ENCODE measurements at regions of chr1 and their contacts with region 1.

Region 1: DNA sequence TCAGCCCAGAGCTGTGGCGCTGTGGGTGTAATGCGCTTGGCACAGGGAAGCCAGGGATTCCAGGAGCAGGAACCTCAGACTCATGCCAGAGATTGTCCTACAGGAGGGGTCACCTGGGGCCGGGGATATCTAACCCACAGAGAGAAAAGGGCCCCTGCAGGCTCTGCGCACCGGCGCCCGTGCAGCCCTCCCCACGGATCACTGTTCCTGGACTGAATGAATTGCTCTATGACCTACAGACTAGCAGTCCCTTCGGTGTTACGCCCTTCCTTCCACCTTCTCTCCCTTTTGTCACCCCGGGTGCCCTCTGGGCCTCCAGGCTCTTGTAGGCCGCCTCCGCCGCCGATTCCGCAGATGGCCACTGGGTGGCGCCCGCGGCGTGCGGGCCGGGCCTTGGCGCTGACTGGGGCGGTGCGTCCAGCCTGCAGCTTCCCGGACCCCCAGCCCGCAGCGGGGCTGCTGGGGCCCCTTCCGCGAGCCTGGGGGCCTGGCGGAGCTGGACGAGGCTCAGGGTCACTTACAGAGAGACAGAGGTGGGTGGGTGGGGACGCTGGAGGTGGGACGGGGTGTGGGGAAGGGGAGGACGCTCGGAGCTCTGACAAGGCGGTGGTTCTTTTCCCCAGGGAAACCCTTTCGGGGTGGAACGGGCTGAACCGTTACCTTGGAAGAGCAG is 101.3 kb downstream of the IER5 start:
- DNase-seq: peak; percentile 19
- ATAC-seq: peak; percentile 98
- H3K4me3 ChIP-seq: peak overlapping the region in 1 of 2 experiments; percentile 25; a peak in 3 of 4 replicates
- H3K27ac ChIP-seq: no peak overlapping the region
- H3K4me1 ChIP-seq: peaks cover 0 to 5% of the 10 kb centered on the region in 2 experiments; a peak in 1 of 4 replicates
- H3K27me3 ChIP-seq: 0 out of 2 replicates have a peak, but pooled peaks cover 9% of the 10 kb centered on the region
- CTCF ChIP-seq: peak; percentile 97 to 99 (median 98)
- POLR2A ChIP-seq: no peak
- RAD21 ChIP-seq: peak; percentile 97

Region 2: GRCh38 chr1:181504399-181504842 is 314.6 kb after region 1 on chr1:
- CTCF ChIA-PET with region 1: interaction called, 3 read pairs
- POLR2A ChIA-PET with region 1: no interaction called
- RAD21 ChIA-PET with region 1: no interaction called
- intact Hi-C with region 1: loop called (anchors 10 kb)
- DNase-seq: peak; percentile 62
- ATAC-seq: peak; percentile 98
- H3K4me3 ChIP-seq: no peak overlapping the region
- H3K27ac ChIP-seq: no peak overlapping the region
- H3K4me1 ChIP-seq: no peaks in the 10 kb centered on the region
- H3K27me3 ChIP-seq: peaks cover 10% of the 10 kb centered on the region
- CTCF ChIP-seq: peak in 2 of 3 experiments; percentile 64 to 66; a peak in 4 of 6 replicates
- POLR2A ChIP-seq: no peak
- RAD21 ChIP-seq: no peak; the same call in 1 of the 2 replicates

Region 3: DNA sequence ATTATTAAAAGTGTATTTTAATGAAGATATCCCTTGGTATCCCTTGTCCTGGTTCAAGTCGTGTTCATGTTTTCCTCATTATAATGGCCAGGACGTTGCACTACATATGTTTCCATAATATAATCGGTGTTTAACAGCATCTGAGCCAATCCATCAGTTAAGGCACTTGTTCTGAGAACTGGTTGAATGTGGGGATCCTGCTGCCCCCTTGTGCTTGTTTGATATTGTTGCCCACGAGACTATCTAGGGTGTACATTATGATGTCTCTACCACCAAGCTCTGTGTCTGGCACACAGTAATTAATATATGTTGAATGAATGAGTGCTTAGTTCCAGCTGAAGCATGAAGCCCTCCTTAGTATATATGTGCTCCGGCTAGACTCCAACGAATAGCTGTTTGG is 486.4 kb after region 1 on chr1:
- CTCF ChIA-PET with region 1: no interaction called
- POLR2A ChIA-PET with region 1: no interaction called
- RAD21 ChIA-PET with region 1: no interaction called
- intact Hi-C with region 1: loop called (anchors 10 kb)
- DNase-seq: peak; percentile 13
- ATAC-seq: peak; percentile 87
- H3K4me3 ChIP-seq: no peak overlapping the region
- H3K27ac ChIP-seq: no peak overlapping the region
- H3K4me1 ChIP-seq: no peaks in the 10 kb centered on the region
- H3K27me3 ChIP-seq: peaks cover 29% of the 10 kb centered on the region; the same call in 1 of the 2 replicates
- CTCF ChIP-seq: peak; percentile 20 to 54 (median 45); a peak in 4 of 6 replicates
- POLR2A ChIP-seq: no peak
- RAD21 ChIP-seq: peak; percentile 60

Region 4: GRCh38 chr1:181712711-181713110 is 522.9 kb after region 1 on chr1:
- CTCF ChIA-PET with region 1: no interaction called
- POLR2A ChIA-PET with region 1: no interaction called
- RAD21 ChIA-PET with region 1: no interaction called
- intact Hi-C with region 1: no loop called
- DNase-seq: no peak
- ATAC-seq: no peak
- H3K4me3 ChIP-seq: no peak overlapping the region
- H3K27ac ChIP-seq: no peak overlapping the region
- H3K4me1 ChIP-seq: no peaks in the 10 kb centered on the region
- H3K27me3 ChIP-seq: peaks cover 57% of the 10 kb centered on the region
- CTCF ChIP-seq: no peak
- POLR2A ChIP-seq: no peak
- RAD21 ChIP-seq: no peak